ENCODE measurements at regions of chr13 and their contacts with region 1.

Region 1: DNA sequence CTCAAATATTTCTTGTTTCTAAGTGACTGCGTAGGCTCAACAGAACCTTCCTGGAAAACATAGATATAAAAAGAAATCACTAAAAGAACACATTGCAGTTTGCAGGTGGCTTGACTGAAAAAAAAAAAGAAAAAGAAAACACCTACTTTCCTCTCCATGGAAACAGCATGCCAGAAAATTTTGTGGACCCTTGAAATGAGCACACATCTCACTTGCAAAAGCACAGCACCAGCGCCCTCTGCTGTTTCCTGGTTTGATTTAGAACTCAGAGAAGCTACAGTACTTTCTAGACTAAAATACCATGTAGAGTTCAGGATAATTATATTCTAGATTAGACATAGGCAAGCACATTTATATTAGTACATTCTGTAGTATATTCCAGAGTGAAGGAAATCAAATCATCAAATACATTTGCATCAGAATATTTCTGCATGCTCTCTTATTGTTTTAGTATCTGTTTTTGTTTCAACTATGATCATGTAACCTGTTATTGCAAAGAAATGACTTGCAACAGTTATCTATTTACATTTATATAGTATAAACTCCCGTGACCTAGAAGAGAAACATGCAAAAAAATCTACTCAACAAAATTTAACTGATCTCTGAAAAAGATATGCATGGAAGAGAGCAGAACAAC is 22.3 kb upstream of the XPO4 start:
- DNase-seq: peak in 2 of 3 donors; percentile 58 to 96
- ATAC-seq: peak; percentile 46
- H3K4me3 ChIP-seq: no peak overlapping the region
- H3K4me1 ChIP-seq: no peaks in the 10 kb centered on the region
- CTCF ChIP-seq: peak; percentile 60

Region 2: DNA sequence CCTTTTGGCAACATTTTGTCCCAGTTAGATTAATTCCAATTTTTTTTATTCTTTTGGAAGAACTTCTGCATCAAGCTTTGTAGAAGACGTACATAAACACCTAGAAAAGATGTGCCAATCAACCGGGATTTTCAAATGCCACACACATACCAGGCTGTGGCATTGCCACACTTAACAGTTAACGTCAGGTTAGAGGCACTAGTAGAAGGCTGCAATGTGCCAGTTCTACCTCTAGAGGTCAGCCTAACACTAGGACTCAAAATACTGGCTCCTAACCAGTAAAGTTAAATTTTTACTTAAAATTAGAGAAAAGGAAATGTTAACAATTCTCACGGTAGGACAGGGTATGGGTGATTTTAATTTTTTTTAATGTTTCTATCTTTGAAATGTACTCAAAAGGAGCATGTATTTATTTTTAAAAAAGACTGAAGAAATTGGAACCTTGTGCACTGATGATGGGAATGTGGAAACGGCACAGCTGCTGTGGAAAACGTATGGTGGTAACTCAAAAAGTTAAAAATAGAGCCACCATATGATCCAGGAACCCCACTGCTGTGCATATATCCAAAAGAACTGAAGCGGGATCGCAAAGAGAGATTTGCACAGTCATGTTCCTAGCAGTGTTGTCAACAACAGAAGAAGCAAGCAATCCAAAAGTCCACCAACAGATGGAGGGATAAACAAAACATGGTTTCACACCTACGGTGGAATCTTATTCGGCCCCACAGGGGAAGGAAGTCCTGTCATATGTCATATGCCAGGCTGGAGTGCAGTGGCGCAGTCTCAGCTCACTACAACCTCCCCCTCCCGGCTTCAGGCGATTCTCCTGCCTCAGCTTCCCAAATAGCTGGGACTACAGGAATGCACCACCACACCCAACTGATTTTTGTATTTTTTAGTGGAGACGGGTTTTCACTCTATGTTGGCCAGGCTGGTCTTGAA is 429.5 kb before region 1 on chr13:
- intact Hi-C with region 1: loop called (anchors 5 to 10 kb)
- DNase-seq: peak in 1 of 3 donors; percentile 86
- ATAC-seq: peak; percentile 93
- H3K4me3 ChIP-seq: no peak overlapping the region
- H3K4me1 ChIP-seq: no peaks in the 10 kb centered on the region
- CTCF ChIP-seq: peak; percentile 89

Region 3: DNA sequence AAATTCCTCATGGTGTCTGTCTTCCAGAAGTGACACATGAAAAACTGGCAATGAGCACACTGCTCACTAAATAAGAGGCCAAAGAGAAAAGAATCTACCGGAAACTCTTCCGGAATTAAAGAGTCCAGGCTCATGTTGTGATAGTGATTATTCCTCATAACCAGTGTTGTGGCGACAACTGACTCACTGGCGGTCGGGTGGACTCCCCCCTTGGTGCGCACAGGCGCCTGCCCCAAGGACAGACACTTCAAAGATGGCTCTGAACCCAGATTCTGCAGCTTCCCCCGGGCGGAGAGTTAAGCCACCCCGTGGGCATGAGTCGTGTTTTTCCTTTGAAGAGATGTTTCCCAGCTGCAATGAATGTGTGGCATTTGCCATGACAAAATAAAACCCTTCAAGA is 211.1 kb before region 1 on chr13:
- intact Hi-C with region 1: loop called (anchors 10 kb)
- DNase-seq: no peak
- ATAC-seq: peak; percentile 6
- H3K4me3 ChIP-seq: no peak overlapping the region
- H3K4me1 ChIP-seq: no peaks in the 10 kb centered on the region
- CTCF ChIP-seq: no peak

Region 4: GRCh38 chr13:20847296-20847695 is 77.6 kb before region 1 on chr13:
- intact Hi-C with region 1: no loop called
- DNase-seq: no peak
- ATAC-seq: no peak
- H3K4me3 ChIP-seq: no peak overlapping the region
- H3K4me1 ChIP-seq: peaks cover 14% of the 10 kb centered on the region
- CTCF ChIP-seq: no peak

Measured in mucosa of descending colon (tissue), 3 donors.